ENCODE measurements at regions of chr17 and their contacts with region 1.

Region 1: DNA sequence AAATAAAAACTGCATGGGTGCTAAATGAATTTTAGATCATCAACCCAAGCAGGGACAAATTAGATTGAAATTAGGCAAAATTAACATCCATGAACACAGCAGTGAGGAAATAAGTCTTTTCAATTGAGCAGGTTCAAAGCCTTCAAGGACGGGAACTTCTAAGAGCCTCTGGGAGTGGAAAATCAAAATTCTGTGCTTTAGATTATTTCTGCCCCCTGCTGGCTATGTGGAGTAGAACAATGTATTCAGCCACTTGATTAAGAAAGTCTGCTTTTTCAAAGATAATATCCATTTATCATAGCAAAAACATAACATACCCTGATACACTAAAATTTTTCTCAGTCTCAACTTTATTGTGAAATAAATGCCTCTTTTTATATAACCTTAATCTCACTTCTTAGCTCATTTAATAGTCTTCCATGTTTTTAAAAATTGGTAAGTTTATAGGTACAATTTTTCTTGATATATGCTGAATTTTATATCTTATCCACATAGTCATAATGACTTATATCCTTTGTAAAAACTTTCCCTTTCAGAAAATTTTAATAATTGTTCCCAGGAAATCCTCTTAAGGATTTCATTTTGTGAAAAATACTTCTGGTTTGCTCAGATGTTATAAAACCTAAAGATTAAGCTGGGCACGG is 28.1 kb upstream of the NOL11 start:
- DNase-seq: peak in 1 of 2 donors; percentile 51
- H3K4me3 ChIP-seq: no peak overlapping the region
- CTCF ChIP-seq: peak in 1 of 3 donors; percentile 49
- POLR2A ChIP-seq: no peak

Region 2: GRCh38 chr17:67376737-67377487 is 312.7 kb before region 1 on chr17 and contains the start of gene PITPNC1:
- intact Hi-C with region 1: loop called (anchors 5 kb)
- DNase-seq: peak; percentile 70 to 96
- H3K4me3 ChIP-seq: peak within 1 kb of the TSS; percentile 70
- CTCF ChIP-seq: no peak
- POLR2A ChIP-seq: no peak
- total RNA-seq, gene PITPNC1: 1.7 to 8.2 (median 4.6) TPM

Region 3: GRCh38 chr17:67824735-67825626 is 135.3 kb after region 1 on chr17 and contains the start of gene BPTF:
- intact Hi-C with region 1: no loop called
- DNase-seq: peak; percentile 85 to 98
- H3K4me3 ChIP-seq: peak within 1 kb of the TSS; percentile 66
- CTCF ChIP-seq: peak in 1 of 3 donors; percentile 41
- POLR2A ChIP-seq: peak in 1 of 2 donors; percentile 71
- total RNA-seq, gene BPTF: 50.1 to 79.9 (median 69.4) TPM